Activated naive CD4-positive, alpha-beta T cell treated with anti-CD3 and anti-CD28 coated beads for 36 hours (primary cell): ENCODE measurements at regions of chr19 and their contacts with region 1.

Region 1: GRCh38 chr19:16330368-16330801 is 5.8 kb downstream of the KLF2 start:
- DNase-seq: peak; percentile 97
- H3K4me3 Mint-ChIP-seq: peak overlapping the region; percentile 24
- H3K27ac Mint-ChIP-seq: peak overlapping the region; percentile 72
- H3K4me1 Mint-ChIP-seq: peaks cover 64% of the 10 kb centered on the region
- H3K27me3 Mint-ChIP-seq: peaks cover 14% of the 10 kb centered on the region

Region 2: DNA sequence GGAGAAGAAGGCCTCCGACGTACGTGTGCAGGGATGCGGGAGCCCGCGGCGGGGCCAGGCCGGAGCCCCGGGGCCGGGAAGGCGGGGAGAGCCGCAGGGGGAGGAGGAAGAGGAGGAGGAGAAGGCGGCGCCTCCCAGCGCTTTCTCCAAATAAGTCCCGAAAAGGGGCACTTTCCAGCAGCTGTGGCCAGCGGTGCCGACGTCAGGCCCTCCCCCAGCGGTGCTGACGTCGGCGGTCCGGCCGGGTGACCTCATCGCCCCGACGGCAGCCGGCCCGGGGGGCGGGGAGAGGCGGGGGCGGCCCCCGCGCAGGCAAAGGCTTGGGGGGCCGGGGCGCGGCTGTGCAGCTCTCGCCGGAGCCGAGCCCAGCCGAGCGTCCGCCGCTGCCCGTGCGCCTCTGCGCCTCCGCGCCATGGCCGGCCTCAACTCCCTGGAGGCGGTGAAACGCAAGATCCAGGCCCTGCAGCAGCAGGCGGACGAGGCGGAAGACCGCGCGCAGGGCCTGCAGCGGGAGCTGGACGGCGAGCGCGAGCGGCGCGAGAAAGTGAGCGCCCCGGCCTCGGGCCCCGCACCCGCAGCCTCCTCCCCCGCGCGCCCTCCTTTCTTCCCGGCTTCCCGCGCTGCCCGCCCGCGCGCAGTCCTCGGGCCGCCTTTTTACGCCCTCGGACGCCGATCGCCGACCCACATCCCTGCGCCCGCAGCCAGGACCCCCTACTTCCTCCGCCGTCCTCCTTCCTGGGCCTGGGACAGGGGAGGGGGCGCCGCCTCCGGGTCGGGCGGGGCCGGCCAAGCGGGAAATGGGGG is 254.0 kb before region 1 on chr19 and contains the start of gene TPM4:
- CTCF ChIA-PET with region 1: no interaction called
- intact Hi-C with region 1: loop called (anchors 2 kb)
- DNase-seq: peak; percentile 93
- H3K4me3 Mint-ChIP-seq: peak within 1 kb of the TSS; percentile 81
- H3K27ac Mint-ChIP-seq: peak within 1 kb of the TSS; percentile 98
- H3K4me1 Mint-ChIP-seq: peaks cover 65% of the 10 kb centered on the region
- H3K27me3 Mint-ChIP-seq: no peaks in the 10 kb centered on the region
- total RNA-seq, gene TPM4: 240 to 254 TPM

Region 3: DNA sequence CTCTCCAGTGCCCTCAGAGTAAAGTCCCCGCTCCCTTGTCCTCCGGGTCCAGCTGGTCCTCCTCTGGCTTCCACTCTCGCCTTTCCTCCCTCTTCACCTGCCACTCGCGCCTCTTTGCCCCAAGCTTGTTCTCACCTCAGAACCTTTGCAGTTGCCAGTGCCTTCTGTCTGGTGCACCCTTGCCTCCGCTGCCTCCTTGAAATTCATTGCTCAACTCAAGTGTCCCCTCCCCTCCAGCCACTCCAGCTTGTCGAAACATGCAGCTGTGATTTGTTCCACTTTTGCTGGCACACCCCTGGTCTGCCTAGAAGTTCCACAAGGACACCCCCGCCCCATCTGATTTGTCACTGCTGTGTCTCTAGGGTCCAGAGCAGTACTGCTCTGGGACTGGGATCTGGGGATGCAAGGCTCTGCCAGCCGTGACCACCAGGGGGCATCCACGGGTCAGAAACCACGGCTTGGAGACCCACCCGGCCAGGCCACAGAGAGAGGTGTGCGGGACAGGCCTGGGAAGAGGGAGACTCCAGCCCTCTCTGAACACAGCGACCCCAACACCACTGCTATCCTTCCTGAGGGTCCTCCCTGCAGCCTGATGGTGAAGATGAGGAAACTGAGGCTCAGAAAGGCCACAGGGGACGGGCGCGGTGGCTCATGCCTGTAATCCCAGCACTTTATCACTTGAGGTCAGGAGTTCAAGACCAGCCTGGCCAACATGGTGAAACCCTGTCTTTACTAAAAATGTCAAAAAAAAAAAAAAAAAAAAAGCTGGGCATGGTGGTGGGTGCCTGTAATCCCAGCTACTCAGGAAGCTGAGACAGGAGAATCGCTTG is 82.8 kb before region 1 on chr19:
- CTCF ChIA-PET with region 1: interaction called, 33 read pairs
- intact Hi-C with region 1: loop called (anchors 2 kb)
- DNase-seq: peak; percentile 89
- H3K4me3 Mint-ChIP-seq: no peak overlapping the region
- H3K27ac Mint-ChIP-seq: no peak overlapping the region
- H3K4me1 Mint-ChIP-seq: peaks cover 17% of the 10 kb centered on the region
- H3K27me3 Mint-ChIP-seq: no peaks in the 10 kb centered on the region

Region 4: GRCh38 chr19:16345457-16345856 is 15.1 kb after region 1 on chr19:
- CTCF ChIA-PET with region 1: no interaction called
- intact Hi-C with region 1: no loop called
- DNase-seq: no peak
- H3K4me3 Mint-ChIP-seq: no peak overlapping the region
- H3K27ac Mint-ChIP-seq: no peak overlapping the region
- H3K4me1 Mint-ChIP-seq: peaks cover 31% of the 10 kb centered on the region
- H3K27me3 Mint-ChIP-seq: no peaks in the 10 kb centered on the region

Region 5: DNA sequence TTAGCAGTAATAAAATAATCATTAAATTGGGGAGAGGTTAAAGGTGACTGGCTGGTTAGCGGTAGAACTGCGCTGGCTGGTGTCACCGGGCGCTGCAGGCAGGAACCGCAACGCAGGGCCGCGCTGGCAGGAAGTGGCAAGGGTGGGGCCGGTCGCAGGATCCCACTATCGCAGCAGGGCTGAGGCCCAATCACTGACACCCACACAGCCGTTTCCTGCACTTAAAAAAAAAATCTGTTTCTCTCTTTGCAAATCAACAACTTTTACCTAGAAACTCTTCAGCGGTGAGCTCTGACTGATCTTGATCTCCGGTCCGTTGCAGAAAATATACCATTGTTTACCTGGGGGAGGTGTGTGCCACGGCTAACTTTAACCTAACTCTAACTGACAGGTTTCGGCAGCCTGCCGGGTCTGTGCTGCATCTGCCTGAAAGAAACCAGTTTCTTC is 41.2 kb after region 1 on chr19:
- CTCF ChIA-PET with region 1: interaction called, 5 read pairs
- intact Hi-C with region 1: loop called (anchors 1 kb)
- DNase-seq: peak; percentile 93
- H3K4me3 Mint-ChIP-seq: peak overlapping the region; percentile 30
- H3K27ac Mint-ChIP-seq: peak overlapping the region; percentile 48
- H3K4me1 Mint-ChIP-seq: peaks cover 40% of the 10 kb centered on the region
- H3K27me3 Mint-ChIP-seq: peaks cover 15% of the 10 kb centered on the region

Region 6: DNA sequence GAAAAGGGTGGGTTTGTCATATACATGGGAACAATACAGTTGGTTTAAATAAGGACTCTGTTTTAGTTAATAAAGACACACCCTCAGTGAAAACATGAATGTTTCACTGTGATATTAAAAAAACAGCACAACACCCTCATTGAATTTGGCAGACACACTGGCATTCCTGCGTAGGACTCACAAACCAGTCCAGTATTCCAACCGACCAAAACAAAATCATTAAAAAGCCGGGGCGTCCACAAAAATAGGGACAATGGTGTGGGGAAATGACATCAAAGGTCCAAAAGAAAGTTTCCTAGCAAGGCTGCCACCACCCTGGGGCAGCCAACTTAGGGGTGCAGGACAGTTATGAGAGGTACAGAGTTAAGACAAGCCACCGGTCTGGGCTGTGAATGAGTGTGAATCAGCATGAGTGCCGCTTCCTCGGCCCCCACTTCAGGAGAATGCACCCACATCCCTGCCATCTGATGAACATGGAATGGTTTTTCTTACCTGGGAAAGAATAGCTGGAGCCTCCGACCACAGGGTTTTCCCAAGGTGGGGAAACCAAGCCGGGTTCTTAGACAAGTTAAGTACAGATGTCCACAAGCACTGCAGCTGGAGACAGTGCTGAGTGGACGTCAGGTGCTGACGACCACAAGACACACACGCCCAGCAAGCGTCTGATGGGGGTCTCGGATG is 67.5 kb after region 1 on chr19:
- CTCF ChIA-PET with region 1: no interaction called
- intact Hi-C with region 1: no loop called
- DNase-seq: no peak
- H3K4me3 Mint-ChIP-seq: no peak overlapping the region
- H3K27ac Mint-ChIP-seq: no peak overlapping the region
- H3K4me1 Mint-ChIP-seq: peaks cover 17% of the 10 kb centered on the region
- H3K27me3 Mint-ChIP-seq: no peaks in the 10 kb centered on the region

Region 7: DNA sequence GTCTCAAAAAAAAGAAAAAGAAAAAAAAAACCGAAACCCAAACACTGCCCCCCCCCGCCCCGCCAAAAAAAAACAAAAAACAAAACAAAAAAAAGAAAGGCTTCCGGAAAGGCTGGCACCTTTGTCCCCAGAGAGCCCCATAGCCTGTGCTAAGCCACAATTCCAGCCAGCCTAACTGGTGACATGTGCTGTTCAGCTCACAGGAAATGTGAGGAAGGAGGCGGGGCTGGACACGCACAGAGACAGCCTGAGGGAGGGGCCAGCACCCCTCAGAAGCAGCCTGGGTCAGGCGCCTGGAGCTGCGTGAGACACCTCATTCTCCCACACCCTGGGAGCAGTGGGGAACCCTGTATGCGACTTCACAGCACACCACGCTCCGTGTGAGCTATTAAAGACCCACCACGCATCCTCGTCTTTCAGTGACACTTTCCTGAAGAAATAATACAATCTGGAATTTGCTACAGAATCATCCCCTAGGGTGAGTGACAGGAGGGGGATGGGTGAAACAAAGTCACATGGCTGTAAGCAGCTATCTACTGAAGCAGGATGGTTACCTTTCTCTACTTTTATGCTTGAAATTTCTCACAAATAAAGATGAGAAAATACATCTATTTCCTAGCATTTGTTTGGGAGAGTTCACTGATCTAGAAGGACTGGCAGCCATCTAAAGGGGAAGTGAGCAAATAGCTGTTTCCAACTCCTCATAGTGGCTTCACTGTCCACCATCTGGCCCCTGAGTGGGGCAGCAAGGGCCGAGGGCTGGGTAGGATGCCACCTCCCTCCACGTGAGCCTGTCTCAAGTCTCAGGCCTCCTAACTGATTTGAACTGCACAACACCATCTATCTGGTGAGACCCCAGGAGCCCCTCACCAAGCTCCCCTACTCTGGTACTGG is 254.1 kb after region 1 on chr19:
- CTCF ChIA-PET with region 1: no interaction called
- intact Hi-C with region 1: loop called (anchors 5 kb)
- DNase-seq: peak; percentile 96
- H3K4me3 Mint-ChIP-seq: peak overlapping the region; percentile 79
- H3K27ac Mint-ChIP-seq: peak overlapping the region; percentile 82
- H3K4me1 Mint-ChIP-seq: peaks cover 79% of the 10 kb centered on the region
- H3K27me3 Mint-ChIP-seq: no peaks in the 10 kb centered on the region